Panc1 (cell line): ENCODE measurements at regions of chr6 and their contacts with region 1.

Region 1: DNA sequence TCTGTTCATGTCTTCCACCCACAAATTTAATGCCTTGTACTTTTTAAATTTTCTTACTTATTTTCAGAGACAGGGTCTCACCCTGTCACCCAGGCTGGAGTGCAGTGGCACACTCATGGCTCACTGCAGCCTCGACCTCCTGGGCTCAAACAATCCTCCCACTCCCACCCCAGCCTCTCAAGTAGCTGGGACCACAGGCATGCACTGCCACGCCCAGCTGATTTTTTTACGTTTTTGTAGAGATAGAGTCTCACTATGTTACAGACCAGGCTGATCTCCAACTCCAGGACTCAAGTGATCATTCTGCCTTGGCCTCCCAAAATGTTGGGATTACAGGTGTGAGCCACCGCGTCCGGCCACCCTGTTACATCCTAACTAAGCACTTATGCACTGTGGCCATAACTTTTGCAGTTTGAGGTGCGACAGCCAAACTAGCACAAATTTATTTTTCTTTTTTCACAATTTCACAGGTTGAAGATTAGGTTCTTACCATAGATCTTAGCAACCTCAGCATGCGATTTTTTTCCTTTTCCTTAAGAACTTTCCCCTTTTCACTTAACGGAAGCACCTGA is 92.1 kb downstream of the EPB41L2 start:
- DNase-seq: no peak
- ATAC-seq: no peak
- H3K4me3 ChIP-seq: no peak overlapping the region
- H3K27ac ChIP-seq: 0 out of 2 replicates have a peak overlapping the region, but pooled peaks have one; percentile 9
- H3K4me1 ChIP-seq: peaks cover 41% of the 10 kb centered on the region
- H3K27me3 ChIP-seq: no peaks in the 10 kb centered on the region
- CTCF ChIP-seq: no peak

Region 2: GRCh38 chr6:131005439-131006016 is 34.6 kb after region 1 on chr6:
- CTCF ChIA-PET with region 1: no interaction called
- POLR2A ChIA-PET with region 1: interaction called, 11 read pairs
- in situ Hi-C with region 1: no loop called
- intact Hi-C with region 1: no loop called
- DNase-seq: no peak
- ATAC-seq: no peak
- H3K4me3 ChIP-seq: no peak overlapping the region
- H3K27ac ChIP-seq: peak overlapping the region; percentile 36; the same call in 1 of the 2 replicates
- H3K4me1 ChIP-seq: peaks cover 43% of the 10 kb centered on the region
- H3K27me3 ChIP-seq: no peaks in the 10 kb centered on the region
- CTCF ChIP-seq: no peak